CD8-positive, alpha-beta T cell (primary cell): ENCODE measurements at regions of chr22 and their contacts with region 1.

Region 1: GRCh38 chr22:19840059-19840458 is 14.6 kb downstream of the GNB1L start:
- DNase-seq: no peak
- ATAC-seq: no peak
- H3K4me3 ChIP-seq: no peak overlapping the region
- H3K4me3 Mint-ChIP-seq: no peak overlapping the region
- H3K27ac ChIP-seq: no peak overlapping the region
- H3K27ac Mint-ChIP-seq: no peak overlapping the region
- H3K4me1 ChIP-seq: peaks cover 15% of the 10 kb centered on the region
- H3K4me1 Mint-ChIP-seq: peaks cover 34% of the 10 kb centered on the region
- H3K27me3 ChIP-seq: no peaks in the 10 kb centered on the region
- H3K27me3 Mint-ChIP-seq: no peaks in the 10 kb centered on the region
- CTCF ChIP-seq: no peak

Region 2: DNA sequence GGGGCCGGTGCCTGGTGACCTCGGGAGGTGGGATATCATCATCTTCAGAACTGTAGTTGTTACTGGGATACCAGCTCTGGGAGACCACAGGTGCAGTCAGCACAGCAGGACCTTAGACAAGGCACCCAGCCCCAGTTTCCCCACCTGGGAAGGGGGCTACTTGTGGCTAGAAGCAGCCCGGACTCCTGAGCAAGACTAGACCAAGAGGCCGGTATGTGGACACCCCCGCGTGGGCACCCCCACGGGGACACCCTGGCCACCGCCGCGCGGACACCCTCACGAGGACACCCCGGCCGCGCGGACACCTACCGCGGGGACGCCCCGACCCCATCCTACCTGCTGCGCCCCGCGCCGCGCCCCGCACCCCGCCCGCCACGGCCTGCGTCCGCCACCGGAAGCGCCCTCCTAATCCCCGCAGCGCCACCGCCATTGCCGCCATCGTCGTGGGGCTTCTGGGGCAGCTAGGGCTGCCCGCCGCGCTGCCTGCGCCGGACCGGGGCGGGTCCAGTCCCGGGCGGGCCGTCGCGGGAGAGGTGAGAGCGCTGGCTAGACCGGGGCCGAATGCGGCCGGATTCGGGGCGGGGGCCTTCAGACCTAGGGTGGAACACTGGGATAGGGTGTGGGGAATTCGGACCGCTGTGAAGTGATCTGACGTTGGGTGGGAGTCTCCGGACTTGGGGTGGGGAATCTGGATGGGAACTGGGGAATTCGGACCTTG is 101.5 kb after region 1 on chr22 and contains the starts of genes COMT and TXNRD2:
- CTCF ChIA-PET with region 1: no interaction called
- POLR2A ChIA-PET with region 1: interaction called, 11 read pairs
- intact Hi-C with region 1: no loop called
- DNase-seq: peak; percentile 38 to 85 (median 73)
- ATAC-seq: peak; percentile 87
- H3K4me3 ChIP-seq: peak within 1 kb of the TSS; percentile 88 to 99
- H3K4me3 Mint-ChIP-seq: peak within 1 kb of the TSS; percentile 91
- H3K27ac ChIP-seq: peak within 1 kb of the TSS; percentile 66 to 71
- H3K27ac Mint-ChIP-seq: peak within 1 kb of the TSS; percentile 96
- H3K4me1 ChIP-seq: peaks cover 29% of the 10 kb centered on the region
- H3K4me1 Mint-ChIP-seq: peaks cover 36% of the 10 kb centered on the region
- H3K27me3 ChIP-seq: no peaks in the 10 kb centered on the region
- H3K27me3 Mint-ChIP-seq: no peaks in the 10 kb centered on the region
- CTCF ChIP-seq: no peak
- total RNA-seq, gene COMT: 10.5 to 11.0 TPM
- total RNA-seq, gene TXNRD2: 11.0 to 14.1 TPM